Ovary (tissue), 10 donors: ENCODE measurements at regions of chr2 and their contacts with region 1.

Region 1: DNA sequence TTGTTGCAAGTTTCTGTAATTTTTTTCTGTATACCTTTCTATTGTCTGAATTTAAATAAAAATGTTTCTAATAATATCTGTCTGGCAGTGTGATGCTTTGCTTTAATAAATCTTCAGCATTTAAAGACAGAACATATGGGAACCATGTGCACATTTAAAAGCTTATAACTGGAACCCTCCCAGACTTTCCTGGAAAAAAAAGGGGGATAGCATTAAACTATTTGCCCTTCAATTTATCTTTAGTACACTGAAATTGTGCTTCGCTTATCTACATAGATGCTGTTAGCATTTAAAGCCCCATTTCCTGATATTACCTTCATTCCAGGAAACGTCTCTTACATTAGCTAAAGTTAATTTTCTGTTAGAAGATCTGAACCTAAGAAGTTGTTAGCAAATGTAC is 64.6 kb downstream of the ZC3H6 start:
- DNase-seq: no peak
- H3K4me3 ChIP-seq: no peak overlapping the region
- H3K27ac ChIP-seq: no peak overlapping the region
- H3K4me1 ChIP-seq: no peaks in the 10 kb centered on the region
- H3K27me3 ChIP-seq: no peaks in the 10 kb centered on the region
- CTCF ChIP-seq: no peak
- EP300 ChIP-seq: no peak
- POLR2A ChIP-seq: no peak

Region 2: GRCh38 chr2:112465382-112465781 is 125.4 kb after region 1 on chr2:
- intact Hi-C with region 1: loop called in 1 of 4 experiments (anchors 10 kb)
- DNase-seq: no peak
- H3K4me3 ChIP-seq: no peak overlapping the region
- H3K27ac ChIP-seq: no peak overlapping the region
- H3K4me1 ChIP-seq: no peaks in the 10 kb centered on the region
- H3K27me3 ChIP-seq: no peaks in the 10 kb centered on the region
- CTCF ChIP-seq: no peak
- EP300 ChIP-seq: no peak
- POLR2A ChIP-seq: no peak

Region 3: DNA sequence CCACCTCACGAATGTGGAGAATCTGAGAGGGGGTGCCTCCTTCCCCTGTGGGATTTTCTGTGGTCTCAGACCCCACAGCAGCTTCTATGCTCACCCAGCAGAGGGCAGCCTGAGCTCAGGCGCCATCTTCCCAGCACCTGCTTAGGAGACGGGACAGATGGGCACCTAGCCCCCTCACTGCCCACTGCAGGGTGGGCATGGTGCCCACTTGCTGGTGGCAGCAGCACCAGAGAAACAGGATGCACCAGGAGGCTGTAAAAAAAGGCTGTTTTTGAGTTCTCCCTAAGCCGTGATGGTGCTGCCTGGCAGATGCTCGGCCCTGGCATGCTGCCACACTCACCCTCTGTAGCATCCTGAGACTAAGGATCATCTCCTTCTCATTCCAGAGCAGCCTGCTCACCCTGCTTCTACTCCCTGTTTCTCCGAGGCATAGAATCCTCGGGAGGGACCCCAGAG is 286.6 kb after region 1 on chr2:
- intact Hi-C with region 1: no loop called
- DNase-seq: peak in 4 of 5 donors; percentile 38 to 60 (median 43)
- H3K4me3 ChIP-seq: no peak overlapping the region
- H3K27ac ChIP-seq: no peak overlapping the region
- H3K4me1 ChIP-seq: no peaks in the 10 kb centered on the region
- H3K27me3 ChIP-seq: no peaks in the 10 kb centered on the region
- CTCF ChIP-seq: peak in 1 of 3 donors; percentile 39
- EP300 ChIP-seq: no peak
- POLR2A ChIP-seq: no peak